ENCODE measurements at regions of chr3 and their contacts with region 1.

Region 1: DNA sequence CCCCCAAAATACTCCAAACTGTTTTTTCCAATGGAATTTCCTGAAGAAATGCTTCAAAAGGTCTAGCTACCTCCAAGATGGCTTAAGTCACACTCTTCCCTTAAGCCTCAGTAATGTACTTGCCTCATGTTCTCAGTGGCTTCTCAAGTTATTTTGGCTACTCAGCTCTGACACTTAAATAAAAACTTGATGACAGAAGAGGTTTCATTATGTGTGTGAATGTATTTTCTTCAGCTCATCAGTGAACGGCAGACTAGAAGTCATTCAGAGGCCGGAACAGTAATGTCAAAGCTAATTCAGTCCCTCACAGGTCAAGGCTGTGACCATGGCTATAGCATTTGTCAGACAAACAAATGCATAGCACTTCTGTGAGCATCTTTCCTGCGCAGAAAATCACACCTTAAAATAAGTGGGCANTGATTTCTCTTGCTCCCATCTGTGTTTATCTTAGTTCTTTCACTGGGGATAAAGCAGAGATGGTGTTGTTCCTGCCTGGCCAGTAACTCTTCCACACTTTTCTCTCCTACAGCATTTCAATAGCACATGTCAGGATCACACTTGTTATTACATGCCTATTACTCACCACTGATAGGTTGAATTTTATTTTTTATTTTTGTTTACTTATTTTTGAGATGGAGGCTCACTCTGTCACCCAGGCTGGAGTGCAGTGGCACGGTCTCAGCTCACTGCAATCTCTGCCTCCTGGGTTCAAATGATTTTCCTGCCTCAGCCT is 68.5 kb upstream of the PLCL2 start:
- DNase-seq: no peak
- ATAC-seq: no peak
- H3K4me3 Mint-ChIP-seq: no peak overlapping the region
- H3K27ac Mint-ChIP-seq: no peak overlapping the region
- H3K4me1 Mint-ChIP-seq: peaks cover 7% of the 10 kb centered on the region
- H3K27me3 Mint-ChIP-seq: no peaks in the 10 kb centered on the region
- CTCF ChIP-seq: no peak

Region 2: DNA sequence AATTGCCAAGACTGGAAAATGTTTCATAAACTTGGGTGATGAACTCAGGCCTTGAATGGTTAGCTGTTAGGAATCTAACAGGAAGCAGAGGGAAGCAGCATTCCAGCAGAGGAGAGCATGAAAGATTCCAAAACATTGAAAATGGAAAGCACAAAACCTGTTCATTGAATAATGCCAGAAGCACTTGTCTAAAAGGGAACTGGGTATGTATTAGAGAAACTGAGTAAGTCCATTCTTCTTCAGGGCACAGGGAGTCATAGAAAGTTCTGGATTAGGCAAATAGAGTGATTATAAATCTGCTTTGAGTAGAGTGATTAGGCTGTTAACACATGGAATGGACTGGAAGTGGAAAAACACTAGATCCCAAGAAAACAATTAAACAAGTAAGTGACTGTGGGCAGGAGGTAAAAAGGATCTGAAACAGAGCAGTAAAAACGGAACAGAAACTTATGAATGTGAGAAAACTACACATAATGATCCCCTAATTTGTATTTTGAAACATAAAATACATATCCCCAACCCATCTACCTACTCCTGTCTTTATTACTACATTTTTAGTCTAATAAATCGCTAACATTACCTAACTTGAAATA is 582.8 kb after region 1 on chr3:
- CTCF ChIA-PET with region 1: no interaction called
- POLR2A ChIA-PET with region 1: no interaction called
- intact Hi-C with region 1: loop called (anchors 10 kb)
- DNase-seq: no peak
- ATAC-seq: peak; percentile 72
- H3K4me3 Mint-ChIP-seq: no peak overlapping the region
- H3K27ac Mint-ChIP-seq: no peak overlapping the region
- H3K4me1 Mint-ChIP-seq: peaks cover 37% of the 10 kb centered on the region
- H3K27me3 Mint-ChIP-seq: no peaks in the 10 kb centered on the region
- CTCF ChIP-seq: no peak

Region 3: DNA sequence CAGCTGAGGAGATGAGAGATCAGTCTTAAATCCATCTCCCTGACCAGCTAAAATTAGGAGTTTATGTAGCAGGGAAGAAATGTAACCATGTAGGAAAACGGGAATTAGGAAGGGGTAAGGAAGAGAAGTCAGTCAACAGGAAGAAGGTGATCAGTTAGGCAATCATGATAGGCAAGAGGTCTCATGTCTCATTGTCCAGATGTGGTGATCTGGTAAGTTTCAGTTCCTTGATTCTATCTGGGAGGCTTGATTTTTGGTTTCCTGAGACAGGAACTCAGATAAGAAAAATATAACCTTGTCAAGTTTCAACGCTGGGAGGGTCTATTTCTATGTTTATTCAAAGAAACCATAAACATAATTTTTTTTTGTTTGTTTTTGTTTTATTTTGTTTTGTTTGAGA is 966.5 kb after region 1 on chr3:
- CTCF ChIA-PET with region 1: no interaction called
- POLR2A ChIA-PET with region 1: no interaction called
- intact Hi-C with region 1: no loop called
- DNase-seq: no peak
- ATAC-seq: no peak
- H3K4me3 Mint-ChIP-seq: no peak overlapping the region
- H3K27ac Mint-ChIP-seq: peak overlapping the region; percentile 2
- H3K4me1 Mint-ChIP-seq: peaks cover 35% of the 10 kb centered on the region
- H3K27me3 Mint-ChIP-seq: no peaks in the 10 kb centered on the region
- CTCF ChIP-seq: no peak

Measured in activated B cell treated with CpG ODN at 0.5 μM for 24 hours (primary cell).